Endothelial cell of umbilical vein (primary cell): ENCODE measurements at regions of chr2 and their contacts with region 1.

Region 1: DNA sequence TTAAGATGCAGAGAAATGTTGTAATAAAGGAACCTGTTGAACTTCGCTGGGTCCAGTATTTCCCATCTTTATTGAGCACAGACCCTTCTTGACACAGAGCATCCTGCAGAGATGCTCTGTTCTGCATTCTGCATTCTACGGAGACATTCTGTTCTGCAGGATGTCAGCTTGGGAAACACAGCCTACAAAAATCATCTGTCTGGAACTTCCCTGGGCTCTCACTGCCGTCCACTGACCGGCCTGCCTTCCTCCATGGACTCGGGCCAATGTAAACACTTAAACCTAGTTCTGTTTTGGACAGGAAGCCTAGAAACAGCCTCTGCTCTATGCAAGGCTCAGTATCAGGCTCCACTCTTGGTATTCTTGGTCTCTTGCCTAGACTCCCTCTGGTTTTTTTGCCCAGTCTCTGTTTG is 90.0 kb upstream of the PPP1CB start:
- DNase-seq: peak; percentile 90
- H3K4me3 ChIP-seq: no peak overlapping the region
- H3K27ac ChIP-seq: peak overlapping the region; percentile 69
- H3K4me1 ChIP-seq: peaks cover 42% of the 10 kb centered on the region
- H3K27me3 ChIP-seq: no peaks in the 10 kb centered on the region
- CTCF ChIP-seq: no peak
- POLR2A ChIP-seq: no peak

Region 2: DNA sequence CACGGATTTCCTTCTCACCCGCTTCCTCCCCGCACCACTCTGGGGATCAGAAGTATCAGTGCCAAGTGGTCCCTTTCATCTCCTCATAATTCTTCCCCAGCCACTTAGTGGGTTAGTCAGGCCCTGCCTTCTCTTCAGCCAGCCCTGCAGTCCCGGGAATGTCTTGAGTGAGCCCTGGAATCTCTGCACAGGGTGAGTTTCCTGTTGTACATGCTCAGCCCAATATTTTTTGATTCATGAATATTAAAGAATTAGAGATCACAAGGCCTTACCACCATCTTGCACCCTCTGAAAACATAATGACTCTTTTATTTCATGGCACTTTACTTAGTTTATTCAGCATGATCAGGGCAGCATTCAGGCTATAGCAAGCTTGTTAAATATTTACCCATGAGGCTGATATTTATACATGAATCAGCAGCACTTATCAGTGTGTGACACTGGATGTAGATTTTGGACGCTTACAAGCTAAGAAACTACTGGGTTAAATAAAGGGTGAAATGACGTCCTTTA is 428.4 kb before region 1 on chr2:
- CTCF ChIA-PET with region 1: no interaction called
- POLR2A ChIA-PET with region 1: no interaction called
- dilution Hi-C with region 1: no loop called
- intact Hi-C with region 1: no loop called
- DNase-seq: no peak
- H3K4me3 ChIP-seq: no peak overlapping the region
- H3K27ac ChIP-seq: no peak overlapping the region
- H3K4me1 ChIP-seq: no peaks in the 10 kb centered on the region
- H3K27me3 ChIP-seq: no peaks in the 10 kb centered on the region
- CTCF ChIP-seq: no peak
- POLR2A ChIP-seq: no peak

Region 3: DNA sequence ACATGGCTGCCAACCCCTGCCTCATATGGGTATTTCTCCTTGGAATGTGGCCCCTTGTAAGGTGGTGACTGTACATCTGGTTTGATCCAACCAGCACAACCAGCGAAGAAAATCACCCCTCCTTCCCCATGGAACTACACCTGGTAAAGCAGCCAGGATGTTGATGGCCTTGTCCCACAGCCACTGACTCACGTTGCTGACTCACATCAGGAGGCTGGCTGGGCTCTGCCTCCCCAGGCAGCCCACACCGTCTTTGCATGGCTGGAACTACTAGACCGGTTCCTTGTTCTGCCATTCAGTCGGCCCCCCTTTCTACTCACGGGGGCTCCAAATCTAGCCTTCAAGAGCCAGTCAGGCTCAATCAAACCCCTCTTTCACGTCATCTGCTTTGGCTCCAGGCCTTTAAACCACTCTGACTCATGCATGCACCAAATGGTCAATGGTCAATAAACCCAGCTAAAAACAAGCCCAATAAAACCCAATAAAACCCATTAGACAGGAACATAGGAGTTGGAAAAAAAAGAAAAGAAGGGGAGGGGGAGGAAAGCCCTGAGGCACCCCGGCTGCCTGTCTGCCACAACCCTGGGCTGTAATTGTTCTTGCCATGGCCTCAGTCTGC is 50.9 kb before region 1 on chr2:
- CTCF ChIA-PET with region 1: interaction called, 15 read pairs
- POLR2A ChIA-PET with region 1: no interaction called
- dilution Hi-C with region 1: no loop called
- intact Hi-C with region 1: loop called (anchors 5 kb)
- DNase-seq: peak; percentile 92
- H3K4me3 ChIP-seq: no peak overlapping the region
- H3K27ac ChIP-seq: peak overlapping the region; percentile 76
- H3K4me1 ChIP-seq: peaks cover 38% of the 10 kb centered on the region
- H3K27me3 ChIP-seq: no peaks in the 10 kb centered on the region
- CTCF ChIP-seq: no peak
- POLR2A ChIP-seq: no peak

Region 4: GRCh38 chr2:28639836-28640235 is 21.8 kb before region 1 on chr2:
- CTCF ChIA-PET with region 1: no interaction called
- POLR2A ChIA-PET with region 1: no interaction called
- dilution Hi-C with region 1: no loop called
- intact Hi-C with region 1: no loop called
- DNase-seq: no peak
- H3K4me3 ChIP-seq: no peak overlapping the region
- H3K27ac ChIP-seq: no peak overlapping the region
- H3K4me1 ChIP-seq: peaks cover 6% of the 10 kb centered on the region
- H3K27me3 ChIP-seq: no peaks in the 10 kb centered on the region
- CTCF ChIP-seq: no peak
- POLR2A ChIP-seq: no peak

Region 5: GRCh38 chr2:28695245-28695647 is 33.7 kb after region 1 on chr2:
- CTCF ChIA-PET with region 1: interaction called, 4 read pairs
- POLR2A ChIA-PET with region 1: no interaction called
- dilution Hi-C with region 1: no loop called
- intact Hi-C with region 1: loop called (anchors 2 kb)
- DNase-seq: no peak
- H3K4me3 ChIP-seq: no peak overlapping the region
- H3K27ac ChIP-seq: no peak overlapping the region
- H3K4me1 ChIP-seq: peaks cover 12% of the 10 kb centered on the region
- H3K27me3 ChIP-seq: no peaks in the 10 kb centered on the region
- CTCF ChIP-seq: no peak
- POLR2A ChIP-seq: no peak

Region 6: DNA sequence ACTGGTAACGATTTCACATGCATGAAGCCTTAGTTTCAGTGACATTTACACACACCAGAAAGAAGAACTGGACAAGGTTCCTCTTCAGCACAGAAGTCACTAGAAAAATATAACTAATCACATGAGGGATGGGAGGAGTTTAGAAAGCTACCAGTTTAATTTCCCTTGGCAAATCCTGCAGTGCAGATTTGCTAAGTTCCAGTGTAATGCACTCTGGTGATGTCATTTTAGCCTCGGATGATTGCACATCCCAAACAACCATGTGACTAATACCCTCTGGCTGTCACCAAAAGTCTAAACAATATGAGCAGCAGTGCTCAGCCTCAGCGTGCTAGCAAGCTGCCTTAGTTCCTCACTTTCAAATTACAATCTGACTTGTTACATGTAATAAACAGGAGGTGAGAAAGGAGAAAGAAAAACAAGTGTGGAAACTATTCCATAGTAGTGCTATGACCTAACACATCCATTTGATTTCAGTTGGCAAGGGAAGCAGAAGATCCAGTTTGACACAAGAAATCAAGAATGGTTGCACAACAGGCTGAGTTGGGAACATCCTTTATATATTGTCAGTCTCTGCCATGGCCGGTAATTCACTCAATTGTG is 54.8 kb after region 1 on chr2:
- CTCF ChIA-PET with region 1: interaction called, 3 read pairs
- POLR2A ChIA-PET with region 1: no interaction called
- dilution Hi-C with region 1: no loop called
- intact Hi-C with region 1: loop called (anchors 2 kb)
- DNase-seq: peak; percentile 88
- H3K4me3 ChIP-seq: no peak overlapping the region
- H3K27ac ChIP-seq: peak overlapping the region; percentile 71
- H3K4me1 ChIP-seq: peaks cover 14% of the 10 kb centered on the region
- H3K27me3 ChIP-seq: no peaks in the 10 kb centered on the region
- CTCF ChIP-seq: no peak
- POLR2A ChIP-seq: no peak